PC-9 (cell line): ENCODE measurements at regions of chr5 and their contacts with region 1.

Region 1: GRCh38 chr5:88244657-88245056 is 24.0 kb downstream of the TMEM161B start:
- DNase-seq: peak; percentile 24 to 91
- H3K4me3 ChIP-seq: peak overlapping the region; percentile 44; the same call in 1 of the 2 replicates
- H3K27ac ChIP-seq: peak overlapping the region; percentile 90
- H3K4me1 ChIP-seq: peaks cover 45% of the 10 kb centered on the region
- H3K27me3 ChIP-seq: no peaks in the 10 kb centered on the region
- CTCF ChIP-seq: no peak

Region 2: DNA sequence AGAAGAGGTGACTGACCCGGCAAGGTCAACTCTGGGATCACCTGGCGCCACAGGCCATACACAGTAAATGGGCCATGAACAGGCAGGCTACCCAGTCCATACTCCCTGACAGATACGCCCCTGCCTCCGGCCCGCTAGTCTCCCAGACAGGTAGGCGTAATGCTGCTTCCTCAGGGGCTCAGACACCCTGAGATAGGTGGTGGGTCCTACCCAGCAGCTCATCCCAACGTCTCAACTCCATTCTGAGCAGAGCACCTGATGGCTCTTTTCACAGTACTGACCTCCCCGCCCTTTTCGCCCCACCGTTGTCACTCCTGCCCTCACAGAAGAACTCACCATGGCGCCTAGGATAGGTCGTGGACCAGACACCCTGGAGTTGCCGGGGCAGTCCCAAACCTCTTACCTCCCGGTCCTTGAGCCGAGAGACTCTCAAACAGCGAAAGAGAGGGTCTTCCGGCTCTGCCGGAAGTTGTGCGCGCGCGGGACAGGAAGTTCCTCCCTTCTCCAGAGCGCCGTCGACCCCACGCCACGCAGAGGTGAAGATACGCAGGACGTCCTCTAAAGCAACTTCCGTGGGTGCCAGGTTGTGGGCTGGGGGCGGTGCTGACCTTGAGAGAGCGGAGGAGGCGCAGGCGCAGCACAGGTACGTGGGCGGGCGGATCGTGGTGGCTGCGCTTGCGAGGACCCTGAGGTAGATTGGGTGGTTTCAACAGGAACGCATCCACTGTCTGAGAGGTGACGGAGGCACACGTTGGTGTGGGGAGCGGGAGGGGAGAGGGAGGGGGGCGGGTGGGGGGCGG is 23.9 kb after region 1 on chr5 and contains the start of gene TMEM161B:
- CTCF ChIA-PET with region 1: no interaction called
- POLR2A ChIA-PET with region 1: no interaction called
- intact Hi-C with region 1: loop called (anchors 2 kb)
- DNase-seq: peak; percentile 87 to 93
- H3K4me3 ChIP-seq: peak within 1 kb of the TSS; percentile 93
- H3K27ac ChIP-seq: peak within 1 kb of the TSS; percentile 58
- H3K4me1 ChIP-seq: peaks cover 33% of the 10 kb centered on the region
- H3K27me3 ChIP-seq: no peaks in the 10 kb centered on the region
- CTCF ChIP-seq: no peak
- total RNA-seq, gene TMEM161B: 17.3 and 24.8 TPM in 2 replicates